ENCODE measurements at regions of chr14 and their contacts with region 1.

Region 1: DNA sequence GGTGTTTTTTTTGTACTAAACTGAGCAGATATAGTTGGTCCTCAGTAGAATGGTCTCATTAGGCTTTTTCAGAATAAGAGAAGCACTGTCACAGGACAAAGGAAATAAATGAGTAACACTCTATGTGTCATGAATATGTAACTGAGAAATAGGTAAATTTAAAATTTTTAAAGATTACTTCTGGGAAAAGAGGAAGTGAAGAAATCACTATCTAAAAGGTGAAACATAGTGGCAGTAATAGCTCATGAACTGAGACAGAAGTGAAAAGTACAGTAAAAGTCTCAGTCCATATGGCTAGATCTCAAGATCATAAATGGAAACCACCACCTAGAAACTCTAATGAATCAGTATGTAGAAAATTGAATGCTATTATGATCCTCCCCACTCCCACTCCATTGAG is 89.3 kb upstream of the TTC7B start:
- DNase-seq: no peak
- H3K4me3 ChIP-seq: no peak overlapping the region
- H3K27ac ChIP-seq: no peak overlapping the region
- H3K4me1 ChIP-seq: no peaks in the 10 kb centered on the region
- H3K27me3 ChIP-seq: no peaks in the 10 kb centered on the region
- CTCF ChIP-seq: no peak
- POLR2A ChIP-seq: no peak

Region 2: GRCh38 chr14:90970167-90970600 is 64.7 kb after region 1 on chr14:
- intact Hi-C with region 1: no loop called
- DNase-seq: no peak
- H3K4me3 ChIP-seq: no peak overlapping the region
- H3K27ac ChIP-seq: no peak overlapping the region
- H3K4me1 ChIP-seq: no peaks in the 10 kb centered on the region
- H3K27me3 ChIP-seq: no peaks in the 10 kb centered on the region
- CTCF ChIP-seq: no peak
- POLR2A ChIP-seq: no peak

Region 3: GRCh38 chr14:91286530-91286937 is 381.0 kb after region 1 on chr14:
- intact Hi-C with region 1: loop called (anchors 5 kb)
- DNase-seq: no peak
- H3K4me3 ChIP-seq: no peak overlapping the region
- H3K27ac ChIP-seq: no peak overlapping the region
- H3K4me1 ChIP-seq: peaks cover 25% of the 10 kb centered on the region
- H3K27me3 ChIP-seq: no peaks in the 10 kb centered on the region
- CTCF ChIP-seq: peak; percentile 75 to 96 (median 91)
- POLR2A ChIP-seq: no peak